WTC11 (cell line): ENCODE measurements at regions of chr19 and their contacts with region 1.

Region 1: DNA sequence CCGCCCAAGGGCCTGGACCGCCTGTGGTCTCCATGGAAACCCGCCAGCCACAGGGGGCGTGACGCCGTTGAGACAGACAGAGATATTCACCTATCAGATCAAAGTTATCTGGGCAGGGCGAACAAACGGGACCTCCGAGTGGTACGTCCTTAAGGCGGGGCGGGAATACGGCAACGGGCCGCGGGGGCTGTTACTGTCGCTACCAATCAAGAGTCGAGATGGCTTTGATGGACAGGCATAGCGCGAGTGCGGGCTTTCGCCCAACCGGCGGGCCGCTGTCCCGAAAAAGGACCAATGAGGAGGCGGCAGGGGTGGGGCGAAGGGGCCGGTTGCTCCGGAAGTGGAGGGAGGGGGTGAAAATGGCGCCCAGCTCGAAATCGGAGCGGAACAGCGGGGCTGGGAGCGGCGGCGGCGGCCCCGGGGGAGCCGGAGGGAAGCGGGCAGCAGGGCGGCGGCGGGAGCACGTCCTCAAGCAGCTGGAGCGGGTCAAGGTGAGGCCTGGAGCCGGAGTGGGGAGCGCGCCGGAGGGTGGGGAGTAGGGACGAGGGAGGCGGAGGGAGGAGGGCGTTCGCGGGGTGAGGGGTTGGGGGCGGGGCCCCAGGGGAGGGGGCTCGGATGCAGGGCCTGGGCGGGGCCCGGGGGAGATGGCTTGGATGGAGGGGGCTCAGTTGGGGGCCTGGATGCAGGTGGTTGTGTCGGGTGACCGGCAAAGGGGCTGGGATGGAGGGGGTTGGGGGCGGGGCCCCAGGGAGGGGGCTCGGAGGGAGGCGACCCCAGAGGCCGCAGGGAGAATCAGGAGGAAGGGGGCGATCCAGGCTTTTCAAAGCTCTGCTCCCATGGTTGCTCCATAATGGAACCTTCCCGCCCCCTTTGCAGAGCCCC is at the start of gene DCAF15:
- DNase-seq: peak; percentile 99
- ATAC-seq: peak; percentile 98
- H3K4me3 Mint-ChIP-seq: peak within 1 kb of the TSS; percentile 87
- H3K27ac Mint-ChIP-seq: peak within 1 kb of the TSS; percentile 57
- H3K4me1 Mint-ChIP-seq: peaks cover 8% of the 10 kb centered on the region
- H3K27me3 Mint-ChIP-seq: no peaks in the 10 kb centered on the region; the same call in none of the 2 replicates
- CTCF ChIP-seq: no peak
- total RNA-seq, gene DCAF15: 82.9 to 89.0 TPM (median 83.3 TPM) in 3 replicates

Region 2: GRCh38 chr19:13880059-13881043 is 72.0 kb before region 1 on chr19:
- CTCF ChIA-PET with region 1: interaction called, 27 read pairs
- POLR2A ChIA-PET with region 1: no interaction called
- DNase-seq: peak; percentile 98
- ATAC-seq: peak; percentile 83
- H3K4me3 Mint-ChIP-seq: peak overlapping the region; percentile 41
- H3K27ac Mint-ChIP-seq: peak overlapping the region; percentile 82
- H3K4me1 Mint-ChIP-seq: peaks cover 26% of the 10 kb centered on the region
- H3K27me3 Mint-ChIP-seq: peaks cover 36% of the 10 kb centered on the region
- CTCF ChIP-seq: peak; percentile 88

Region 3: DNA sequence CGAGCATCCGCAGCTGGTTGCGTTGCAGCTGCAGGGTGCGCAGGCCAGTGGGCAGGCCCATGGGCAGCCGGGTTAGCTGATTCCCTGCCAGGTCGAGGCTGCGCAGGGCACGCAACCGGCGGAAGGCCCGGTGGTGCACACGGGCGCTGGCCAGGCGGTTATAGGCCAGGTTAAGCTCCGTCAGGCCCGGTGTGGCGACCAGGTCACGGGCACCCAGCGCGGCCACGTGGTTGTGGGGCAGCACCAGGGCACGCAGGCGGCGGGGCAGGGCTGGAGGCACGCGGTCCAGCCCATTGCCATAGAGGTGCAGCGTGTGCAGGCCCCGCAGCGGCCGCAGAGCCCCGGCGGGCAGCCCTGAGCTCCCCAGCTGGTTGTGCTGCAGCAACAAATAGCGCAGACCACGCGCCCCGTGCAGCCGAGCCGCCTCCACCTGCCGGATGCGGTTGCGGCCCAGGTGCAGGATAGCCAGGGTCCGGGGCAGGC is 19.4 kb before region 1 on chr19:
- CTCF ChIA-PET with region 1: interaction called, 39 read pairs
- POLR2A ChIA-PET with region 1: interaction called, 5 read pairs
- DNase-seq: peak; percentile 23
- ATAC-seq: no peak
- H3K4me3 Mint-ChIP-seq: no peak overlapping the region
- H3K27ac Mint-ChIP-seq: peak overlapping the region; percentile 59; the same call in 1 of the 2 replicates
- H3K4me1 Mint-ChIP-seq: peaks cover 29% of the 10 kb centered on the region
- H3K27me3 Mint-ChIP-seq: no peaks in the 10 kb centered on the region
- CTCF ChIP-seq: no peak

Region 4: DNA sequence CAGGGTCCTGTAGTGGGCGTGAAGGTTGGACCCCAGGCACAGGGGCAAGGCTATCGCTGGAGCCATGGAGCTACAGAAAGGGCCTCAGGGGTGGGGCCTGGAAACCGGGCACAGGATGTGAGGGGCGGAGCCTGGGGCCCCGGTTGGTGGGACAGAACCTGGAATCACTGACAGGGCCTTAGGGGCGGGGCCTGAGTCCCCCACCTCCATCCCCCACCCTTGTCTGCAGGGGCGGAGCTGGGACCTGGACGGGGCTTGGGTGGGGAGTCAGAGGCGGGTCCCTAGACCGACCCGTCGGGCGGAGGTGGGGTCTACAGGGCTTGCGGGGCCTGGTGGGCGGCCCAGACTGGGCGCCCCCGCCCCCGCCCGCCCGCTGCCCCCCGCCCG is 25.9 kb after region 1 on chr19:
- CTCF ChIA-PET with region 1: interaction called, 11 read pairs
- POLR2A ChIA-PET with region 1: interaction called, 6 read pairs
- DNase-seq: peak; percentile 99
- ATAC-seq: peak; percentile 93
- H3K4me3 Mint-ChIP-seq: peak overlapping the region; percentile 49
- H3K27ac Mint-ChIP-seq: peak overlapping the region; percentile 27; the same call in 1 of the 2 replicates
- H3K4me1 Mint-ChIP-seq: peaks cover 22% of the 10 kb centered on the region
- H3K27me3 Mint-ChIP-seq: no peaks in the 10 kb centered on the region; the same call in 1 of the 2 replicates
- CTCF ChIP-seq: no peak

Region 5: GRCh38 chr19:14059093-14059480 is 106.7 kb after region 1 on chr19:
- CTCF ChIA-PET with region 1: interaction called, 14 read pairs
- POLR2A ChIA-PET with region 1: no interaction called
- DNase-seq: peak; percentile 78
- ATAC-seq: peak; percentile 50
- H3K4me3 Mint-ChIP-seq: peak overlapping the region; percentile 86
- H3K27ac Mint-ChIP-seq: no peak overlapping the region
- H3K4me1 Mint-ChIP-seq: peaks cover 16% of the 10 kb centered on the region
- H3K27me3 Mint-ChIP-seq: peaks cover 32% of the 10 kb centered on the region
- CTCF ChIP-seq: peak; percentile 87

Region 6: DNA sequence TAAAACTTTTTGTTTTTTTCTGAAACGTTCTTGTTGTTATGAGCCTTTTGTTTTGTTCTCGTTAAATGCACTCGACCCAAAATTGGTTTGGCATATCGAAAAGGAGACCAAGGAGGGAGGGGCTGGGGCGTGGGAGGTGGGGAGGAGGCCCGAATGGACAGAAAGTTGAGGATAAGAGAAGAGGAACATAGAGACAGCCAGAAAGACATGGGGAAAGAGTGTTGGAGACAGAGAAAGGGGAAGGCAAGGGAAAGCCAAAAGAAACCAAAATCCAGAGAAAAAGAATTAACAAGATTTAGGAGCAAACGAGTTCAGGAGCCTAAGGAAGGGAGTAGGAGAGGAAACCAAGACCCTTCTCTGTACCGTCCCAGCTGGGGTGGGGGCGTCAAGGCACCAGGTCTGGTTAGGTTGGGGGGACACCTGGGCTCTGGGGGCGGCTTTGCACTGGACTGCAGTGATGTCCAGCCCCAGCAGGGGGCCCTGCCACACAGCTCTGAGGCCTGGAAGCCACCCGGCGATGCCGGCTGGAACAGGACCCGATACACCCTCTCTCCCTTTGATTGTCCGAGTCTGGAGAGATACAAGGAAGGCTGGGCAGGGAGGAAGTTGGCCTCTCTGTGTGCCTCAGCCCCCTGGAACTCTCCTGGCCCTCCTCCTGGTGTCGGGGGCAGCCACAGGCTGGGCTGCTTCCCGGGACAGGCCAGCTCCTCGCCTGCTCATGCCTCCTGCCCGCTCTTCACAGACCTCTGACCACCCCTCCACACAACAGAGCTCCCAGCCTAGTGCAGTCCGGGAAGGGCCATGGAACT is 195.6 kb after region 1 on chr19:
- CTCF ChIA-PET with region 1: no interaction called
- POLR2A ChIA-PET with region 1: no interaction called
- DNase-seq: peak; percentile 74
- ATAC-seq: peak; percentile 47
- H3K4me3 Mint-ChIP-seq: no peak overlapping the region
- H3K27ac Mint-ChIP-seq: peak overlapping the region; percentile 70
- H3K4me1 Mint-ChIP-seq: peaks cover 27% of the 10 kb centered on the region
- H3K27me3 Mint-ChIP-seq: no peaks in the 10 kb centered on the region; the same call in 1 of the 2 replicates
- CTCF ChIP-seq: no peak